Aorta (tissue), 5 donors: ENCODE measurements at regions of chr1 and their contacts with region 1.

Region 1: DNA sequence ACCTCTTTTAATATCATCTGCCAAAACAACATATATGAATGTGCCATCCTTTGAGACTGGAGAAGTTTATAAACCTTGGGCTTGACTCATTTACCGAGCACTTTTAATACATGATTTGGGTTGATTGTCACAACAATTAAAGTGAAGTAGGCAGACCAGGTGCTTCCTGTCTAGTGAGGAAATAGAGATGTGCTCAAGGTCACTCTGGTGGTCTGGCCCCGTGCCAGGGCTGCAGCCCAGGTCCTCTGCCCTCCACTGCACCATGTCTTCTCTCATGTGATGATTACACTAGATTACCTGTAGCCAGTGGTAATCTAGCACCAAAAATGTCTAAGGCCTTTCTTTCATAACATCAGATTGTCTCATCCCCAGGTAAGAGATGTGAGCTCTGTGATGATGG is 61.8 kb upstream of the LAMC2 start:
- DNase-seq: no peak
- ATAC-seq: no peak
- H3K4me3 ChIP-seq: no peak overlapping the region
- H3K27ac ChIP-seq: no peak overlapping the region
- H3K4me1 ChIP-seq: no peaks in the 10 kb centered on the region
- H3K27me3 ChIP-seq: no peaks in the 10 kb centered on the region

Region 2: GRCh38 chr1:182869241-182869666 is 255.0 kb before region 1 on chr1:
- intact Hi-C with region 1: loop called in 1 of 2 experiments (anchors 10 kb)
- DNase-seq: no peak
- ATAC-seq: no peak
- H3K4me3 ChIP-seq: no peak overlapping the region
- H3K27ac ChIP-seq: no peak overlapping the region
- H3K4me1 ChIP-seq: no peaks in the 10 kb centered on the region
- H3K27me3 ChIP-seq: no peaks in the 10 kb centered on the region

Region 3: GRCh38 chr1:183070923-183071618 is 53.2 kb before region 1 on chr1:
- intact Hi-C with region 1: no loop called
- DNase-seq: no peak
- ATAC-seq: no peak
- H3K4me3 ChIP-seq: no peak overlapping the region
- H3K27ac ChIP-seq: no peak overlapping the region
- H3K4me1 ChIP-seq: peaks cover 9 to 23% of the 10 kb centered on the region in 2 donors
- H3K27me3 ChIP-seq: no peaks in the 10 kb centered on the region